Astrocyte of the cerebellum (primary cell): ENCODE measurements at regions of chr20 and their contacts with region 1.

Region 1: DNA sequence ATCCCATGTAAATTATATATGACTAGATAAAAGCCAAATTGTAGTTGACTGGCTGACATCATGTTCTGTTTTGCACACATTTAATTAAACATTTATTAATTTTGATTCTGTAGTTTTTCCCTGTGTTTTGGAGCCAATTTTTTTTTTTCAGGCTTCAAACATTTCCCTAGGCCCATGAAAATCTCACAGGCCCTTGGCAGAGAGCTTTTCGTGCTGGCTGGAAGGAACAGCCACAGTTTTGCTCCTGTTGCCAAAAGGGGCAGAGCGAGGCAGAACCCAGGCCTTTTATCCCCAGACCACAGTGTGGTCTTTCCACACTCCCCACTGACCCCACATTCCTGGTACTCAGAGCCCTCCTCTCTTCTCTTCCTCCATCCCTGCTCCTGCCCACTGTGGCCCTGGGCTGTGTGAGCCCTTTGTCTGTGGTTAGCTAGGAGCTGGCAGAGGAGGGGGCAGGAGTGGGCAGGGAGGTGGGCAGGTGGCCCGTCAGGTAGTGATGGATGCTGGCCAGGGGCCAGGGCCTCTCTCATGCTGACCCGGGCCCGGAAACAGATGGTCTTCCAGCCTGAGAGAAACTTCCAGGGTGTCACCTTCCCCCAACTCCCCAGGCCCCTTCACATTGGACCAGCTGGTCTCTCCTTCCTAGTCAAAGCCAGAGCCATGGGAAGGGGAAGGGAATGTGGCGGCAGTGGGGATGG is 19.4 kb upstream of the CCM2L start:
- DNase-seq: peak; percentile 6
- H3K4me3 ChIP-seq: no peak overlapping the region
- CTCF ChIP-seq: no peak

Region 2: DNA sequence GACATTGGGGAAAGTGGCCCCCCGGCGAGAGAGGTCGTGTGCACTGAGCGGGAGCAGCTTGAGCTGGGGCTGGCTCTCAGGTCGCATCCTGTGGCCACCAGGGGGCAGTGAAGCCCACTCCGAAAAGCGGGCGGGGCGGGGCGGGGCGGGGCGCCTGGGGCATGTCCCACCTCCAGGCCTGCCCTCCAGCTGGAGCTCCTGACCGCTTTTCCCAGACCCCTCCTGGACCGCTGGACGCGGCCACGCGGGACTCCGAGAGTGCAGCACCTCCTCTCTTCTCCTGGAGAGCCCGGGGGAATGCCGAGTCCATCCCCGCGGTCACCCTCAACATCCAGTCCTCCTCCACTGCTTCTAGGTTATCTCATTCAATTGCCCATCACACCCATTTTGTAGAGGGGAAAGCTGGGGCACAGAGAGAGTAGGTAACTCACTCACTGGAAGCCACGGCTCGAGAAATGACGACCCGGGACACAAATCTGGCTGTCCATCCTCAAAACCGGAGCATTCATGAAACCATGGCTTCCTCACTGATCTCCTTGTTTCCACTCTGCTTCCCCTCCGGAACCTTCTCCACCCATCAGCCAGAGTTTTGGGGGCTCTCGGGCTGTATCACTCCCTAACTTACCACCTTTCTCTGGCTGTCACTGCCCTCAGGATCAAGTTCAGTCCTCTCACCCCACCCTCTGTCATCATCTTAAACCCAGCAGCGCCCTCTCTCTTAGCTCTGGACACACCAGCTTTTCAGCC is 329.0 kb before region 1 on chr20:
- in situ Hi-C with region 1: no loop called
- DNase-seq: no peak
- H3K4me3 ChIP-seq: peak overlapping the region; percentile 28
- CTCF ChIP-seq: peak; percentile 61

Region 3: GRCh38 chr20:31918466-31919105 is 72.2 kb before region 1 on chr20:
- in situ Hi-C with region 1: loop called (anchors 5 kb)
- DNase-seq: no peak
- H3K4me3 ChIP-seq: no peak overlapping the region
- CTCF ChIP-seq: no peak

Region 4: GRCh38 chr20:31934968-31935764 is 55.6 kb before region 1 on chr20:
- in situ Hi-C with region 1: no loop called
- DNase-seq: no peak
- H3K4me3 ChIP-seq: no peak overlapping the region
- CTCF ChIP-seq: no peak

Region 5: DNA sequence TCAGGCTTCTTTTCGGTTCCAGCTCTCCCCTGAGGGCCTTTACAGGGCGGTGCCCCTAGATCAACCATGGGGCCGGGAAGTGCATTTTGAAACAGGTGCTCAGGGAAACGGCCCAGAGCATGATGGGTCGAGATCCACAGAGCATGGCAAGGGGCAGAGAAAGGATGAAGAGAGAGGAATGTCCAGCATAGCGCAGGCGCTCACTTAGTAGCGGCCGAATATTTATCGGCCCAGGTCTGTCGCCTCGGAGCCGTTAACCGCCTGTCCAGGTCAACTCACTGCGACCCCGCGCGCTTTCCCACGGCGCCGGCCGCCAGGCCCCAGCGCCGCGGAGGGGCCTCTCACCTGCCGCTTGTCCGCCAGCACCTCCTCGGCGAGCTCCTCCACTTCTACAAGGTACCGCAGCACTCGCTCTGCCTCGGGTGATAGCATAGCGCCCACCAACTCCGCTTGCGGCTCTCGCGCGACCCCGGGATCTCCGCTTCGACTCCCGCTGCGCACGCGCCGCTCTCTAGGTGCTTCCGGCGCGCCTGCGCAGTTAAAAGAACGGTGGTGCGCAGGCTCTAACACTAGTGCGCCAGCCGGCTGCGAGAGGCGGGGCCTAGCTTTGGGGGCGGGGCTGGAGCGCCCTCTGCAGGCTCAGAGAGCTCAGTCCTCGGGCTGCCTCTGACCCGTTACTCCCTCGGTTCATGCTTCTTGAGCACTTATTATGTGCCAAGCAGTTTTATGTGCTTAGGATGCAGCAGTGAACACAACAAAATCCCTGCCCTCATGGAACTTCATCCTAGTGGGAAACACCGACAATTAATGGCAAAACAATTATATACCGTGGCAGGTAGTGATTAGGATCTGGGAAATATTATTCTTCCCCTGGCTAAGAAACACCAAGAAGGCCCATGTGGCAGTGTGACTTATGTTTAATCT is 39.0 kb before region 1 on chr20 and contains the start of gene PDRG1:
- in situ Hi-C with region 1: no loop called
- DNase-seq: peak; percentile 88
- H3K4me3 ChIP-seq: peak within 1 kb of the TSS; percentile 76
- CTCF ChIP-seq: peak; percentile 93